BJ (cell line): ENCODE measurements at regions of chr16 and their contacts with region 1.

Region 1: DNA sequence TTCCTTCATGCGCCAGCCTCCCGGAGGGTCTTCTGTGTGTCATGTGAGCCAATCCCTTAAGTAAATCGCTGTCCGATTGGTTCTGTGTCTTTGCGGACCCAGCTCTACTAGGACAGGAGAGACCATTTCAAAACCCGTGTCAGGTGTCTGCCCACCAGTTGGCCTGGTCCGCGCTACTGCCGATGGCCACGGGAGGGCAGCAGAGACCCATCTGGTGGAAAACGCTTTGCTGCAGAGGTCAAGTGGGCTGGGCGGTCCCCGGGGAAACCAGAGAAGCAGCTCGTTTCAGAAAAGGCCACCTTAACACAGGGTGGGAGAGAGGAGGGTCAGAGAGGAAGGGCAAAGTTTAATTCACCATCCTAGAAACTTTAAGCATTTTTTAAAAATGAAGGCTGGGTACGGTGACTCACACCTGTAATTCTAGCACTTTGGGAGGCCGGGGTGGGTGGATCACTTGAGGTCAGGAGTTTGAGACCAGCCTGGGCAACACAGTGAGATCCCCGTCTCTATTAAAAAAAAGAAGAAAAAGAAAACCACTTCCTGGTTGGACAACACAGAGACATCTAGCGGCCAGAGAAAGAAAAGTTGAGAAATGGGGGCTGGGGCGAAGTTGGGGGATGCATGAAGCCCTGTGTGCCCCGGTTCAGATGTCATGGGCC is 2.8 kb upstream of the CIBAR2 start:
- DNase-seq: no peak
- H3K4me3 ChIP-seq: no peak overlapping the region
- H3K27me3 ChIP-seq: no peaks in the 10 kb centered on the region
- CTCF ChIP-seq: peak; percentile 99

Region 2: DNA sequence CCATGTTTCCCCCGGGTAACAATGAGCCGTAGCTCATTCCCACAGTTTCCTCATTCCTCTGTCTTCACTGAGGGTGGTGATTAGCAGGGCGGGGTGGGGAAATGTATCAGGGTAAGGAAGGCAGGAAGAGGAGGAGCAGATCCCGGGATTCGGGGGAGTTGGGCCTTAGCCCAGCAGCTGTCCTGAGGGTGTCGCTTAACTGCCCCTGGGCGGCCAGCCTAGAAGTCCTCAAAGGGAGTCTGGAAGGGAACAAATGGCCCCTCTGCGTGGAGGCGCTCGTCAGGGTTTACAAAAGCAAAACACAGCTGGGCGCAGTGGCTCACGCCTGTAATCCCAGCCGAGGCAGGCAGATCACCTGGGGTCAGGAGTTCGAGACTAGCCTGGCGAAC is 1201.8 kb before region 1 on chr16:
- CTCF ChIA-PET with region 1: no interaction called
- POLR2A ChIA-PET with region 1: no interaction called
- DNase-seq: no peak
- H3K4me3 ChIP-seq: no peak overlapping the region
- H3K27me3 ChIP-seq: no peaks in the 10 kb centered on the region
- CTCF ChIP-seq: no peak

Region 3: DNA sequence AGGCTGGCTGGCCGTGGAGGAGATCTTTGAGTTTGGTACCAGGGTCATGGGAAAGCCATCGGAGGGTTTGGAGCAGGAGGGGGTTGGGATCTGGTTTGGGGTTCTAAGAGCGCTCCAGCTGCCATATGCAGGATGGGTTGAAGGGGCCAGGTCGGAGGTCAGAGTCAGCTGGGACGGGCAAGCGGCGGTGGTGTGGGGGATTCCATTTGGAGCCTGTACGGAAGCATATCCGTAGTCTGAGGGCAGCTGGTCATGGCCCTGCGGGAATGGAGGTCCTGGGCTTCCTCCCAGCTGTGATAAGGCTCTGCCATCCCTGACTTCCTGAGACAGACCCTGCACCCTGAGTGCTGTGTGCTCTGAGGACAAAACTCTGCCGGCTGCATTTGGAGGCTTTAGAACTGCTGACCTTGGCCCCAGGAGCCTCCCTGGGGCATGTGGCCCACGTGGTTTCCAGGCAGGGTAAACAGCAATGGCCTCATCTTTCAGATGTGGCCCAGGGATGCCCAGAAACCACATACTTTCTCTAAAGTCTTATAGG is 700.2 kb before region 1 on chr16:
- CTCF ChIA-PET with region 1: no interaction called
- POLR2A ChIA-PET with region 1: no interaction called
- DNase-seq: no peak
- H3K4me3 ChIP-seq: no peak overlapping the region
- H3K27me3 ChIP-seq: peaks cover 12% of the 10 kb centered on the region
- CTCF ChIP-seq: no peak

Region 4: GRCh38 chr16:85072947-85073346 is 42.1 kb before region 1 on chr16:
- CTCF ChIA-PET with region 1: no interaction called
- POLR2A ChIA-PET with region 1: no interaction called
- DNase-seq: peak; percentile 46
- H3K4me3 ChIP-seq: no peak overlapping the region
- H3K27me3 ChIP-seq: no peaks in the 10 kb centered on the region
- CTCF ChIP-seq: no peak

Region 5: DNA sequence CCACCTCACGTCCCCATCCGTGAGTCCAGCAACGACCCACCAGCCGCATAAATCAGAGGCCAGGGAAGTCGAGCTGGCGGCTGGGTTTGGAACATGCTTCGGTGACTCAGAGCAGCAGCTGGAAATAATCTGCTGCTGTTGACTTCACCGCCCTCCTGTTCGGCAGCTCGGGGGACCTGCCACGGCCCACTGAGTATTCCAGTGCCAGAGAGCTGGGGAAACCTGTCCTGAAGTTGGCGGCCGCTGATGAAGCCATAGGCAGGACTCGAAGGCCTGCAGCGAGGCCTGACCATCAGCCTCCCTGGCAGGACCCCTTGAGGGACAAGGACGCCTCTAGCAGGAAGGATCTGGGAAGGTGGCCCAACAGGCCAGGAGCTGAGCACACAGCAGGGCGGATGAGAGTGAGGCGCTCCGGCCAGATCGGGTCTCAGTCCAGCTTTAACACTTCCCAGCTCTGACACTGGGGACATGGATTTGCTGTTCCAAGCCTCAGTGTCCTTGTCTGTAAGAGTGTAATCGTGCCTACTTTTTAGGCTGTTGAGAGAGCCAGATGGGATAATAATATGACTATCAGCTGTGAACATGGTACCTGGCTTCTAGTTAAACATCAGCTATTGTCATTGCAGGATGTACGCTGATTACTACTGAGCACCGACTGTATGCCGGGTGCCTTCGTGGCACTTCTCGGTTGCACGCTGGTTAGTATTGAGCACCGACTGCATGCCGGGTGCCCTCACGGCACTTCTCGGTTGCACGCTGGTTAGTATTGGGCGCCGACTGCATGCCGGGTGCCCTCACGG is 47.6 kb after region 1 on chr16:
- CTCF ChIA-PET with region 1: interaction called, 14 read pairs
- POLR2A ChIA-PET with region 1: no interaction called
- DNase-seq: no peak
- H3K4me3 ChIP-seq: no peak overlapping the region
- H3K27me3 ChIP-seq: no peaks in the 10 kb centered on the region
- CTCF ChIP-seq: no peak

Region 6: DNA sequence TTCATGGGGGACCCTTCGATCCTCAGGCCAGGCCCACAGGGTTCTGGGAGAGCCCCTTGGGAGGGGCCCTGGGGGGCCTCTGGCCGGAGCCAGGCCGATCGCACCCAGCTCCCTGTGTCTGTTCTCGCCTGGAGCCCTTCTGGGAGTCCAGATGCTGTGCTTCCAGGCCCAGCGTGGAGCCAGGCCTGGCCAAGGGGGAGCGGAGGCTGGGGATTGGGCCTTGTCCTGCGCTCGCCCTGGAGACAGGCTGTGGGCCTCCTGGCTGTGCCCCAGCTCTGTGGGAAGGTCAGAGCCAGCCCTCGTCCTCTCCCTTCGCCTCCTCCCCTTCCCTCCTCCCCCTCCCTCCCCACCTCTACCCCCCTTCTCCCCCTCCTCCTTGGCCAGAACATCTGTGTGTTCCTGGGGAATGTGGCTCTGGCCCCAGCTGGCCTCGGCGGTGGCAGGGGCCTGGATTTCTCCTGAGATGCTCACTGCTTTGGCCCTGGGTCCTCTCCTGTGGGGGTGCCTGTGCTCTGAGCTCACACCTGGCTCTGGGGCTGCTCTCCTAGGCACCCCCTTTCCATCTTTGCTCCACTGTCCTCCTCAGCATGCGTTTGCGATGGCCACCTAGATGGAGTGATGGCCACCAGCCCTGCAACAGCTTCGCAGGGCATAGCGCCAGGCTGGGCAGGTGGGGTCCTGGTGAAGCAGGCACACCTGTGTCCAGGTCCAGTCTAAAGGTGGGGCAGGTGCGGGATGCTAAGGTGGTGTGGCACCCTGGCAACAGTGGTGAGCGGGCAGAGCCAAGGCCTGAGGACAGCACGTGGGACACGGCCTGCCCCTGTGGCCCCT is 87.8 kb after region 1 on chr16:
- CTCF ChIA-PET with region 1: interaction called, 10 read pairs
- POLR2A ChIA-PET with region 1: no interaction called
- DNase-seq: peak; percentile 60
- H3K4me3 ChIP-seq: no peak overlapping the region
- H3K27me3 ChIP-seq: no peaks in the 10 kb centered on the region
- CTCF ChIP-seq: no peak

Region 7: GRCh38 chr16:85253084-85253941 is 138.3 kb after region 1 on chr16:
- CTCF ChIA-PET with region 1: interaction called, 21 read pairs
- POLR2A ChIA-PET with region 1: no interaction called
- DNase-seq: no peak
- H3K4me3 ChIP-seq: no peak overlapping the region
- H3K27me3 ChIP-seq: no peaks in the 10 kb centered on the region
- CTCF ChIP-seq: peak; percentile 97

Region 8: GRCh38 chr16:85275533-85276249 is 160.7 kb after region 1 on chr16:
- CTCF ChIA-PET with region 1: interaction called, 13 read pairs
- POLR2A ChIA-PET with region 1: no interaction called
- DNase-seq: no peak
- H3K4me3 ChIP-seq: no peak overlapping the region
- H3K27me3 ChIP-seq: no peaks in the 10 kb centered on the region
- CTCF ChIP-seq: peak; percentile 96

Region 9: GRCh38 chr16:85420501-85421337 is 305.7 kb after region 1 on chr16:
- CTCF ChIA-PET with region 1: interaction called, 14 read pairs
- POLR2A ChIA-PET with region 1: no interaction called
- DNase-seq: no peak
- H3K4me3 ChIP-seq: no peak overlapping the region
- H3K27me3 ChIP-seq: no peaks in the 10 kb centered on the region
- CTCF ChIP-seq: peak; percentile 76